ENCODE measurements at regions of chr4 and their contacts with region 1.

Region 1: DNA sequence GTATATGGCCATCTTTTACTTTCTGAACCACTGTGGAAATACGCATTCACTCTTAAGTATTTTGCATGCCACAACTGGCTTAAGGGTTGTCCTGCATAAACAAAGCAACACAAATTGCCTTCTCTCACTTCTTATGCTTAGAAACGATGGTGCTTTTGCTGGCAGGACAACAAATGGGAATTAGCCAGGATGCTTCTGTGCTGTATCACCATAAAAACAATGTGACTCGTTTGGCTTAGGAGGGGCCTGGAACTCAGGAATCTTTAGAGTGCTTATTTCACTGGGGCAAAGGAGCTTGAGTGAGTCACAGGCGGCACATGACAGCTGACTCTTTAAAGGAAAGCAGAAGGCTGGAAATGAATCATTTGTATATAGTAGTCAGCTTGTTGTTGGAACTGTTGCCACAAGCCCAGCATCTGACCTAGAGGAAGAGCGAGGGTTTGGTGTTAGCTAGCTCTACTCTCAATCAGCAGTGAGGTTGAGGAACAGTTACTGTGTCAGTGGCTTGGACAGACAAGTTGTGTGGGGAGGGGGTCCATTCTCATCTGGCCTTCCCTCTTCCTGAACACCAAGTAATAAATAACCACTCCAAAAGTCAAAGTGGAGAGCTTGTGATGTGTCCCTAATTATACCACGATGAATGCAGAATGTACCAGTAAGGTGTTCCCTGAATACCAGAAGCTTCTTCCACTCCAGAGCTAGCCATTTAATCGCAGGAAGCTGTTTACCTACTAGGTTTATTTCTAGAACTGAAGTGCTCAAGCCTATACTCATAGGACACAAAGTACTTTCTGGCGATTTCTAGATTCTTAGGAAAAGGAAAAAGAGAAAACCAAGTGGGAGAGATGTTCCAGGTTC is 293.1 kb downstream of the CAMK2D start:
- DNase-seq: peak; percentile 91 to 92
- ATAC-seq: peak; percentile 94
- H3K4me3 ChIP-seq: peak overlapping the region in 1 of 2 donors; percentile 26
- H3K27ac ChIP-seq: peak overlapping the region; percentile 94 to 97
- H3K4me1 ChIP-seq: peaks cover 3 to 7% of the 10 kb centered on the region in 2 donors
- H3K27me3 ChIP-seq: no peaks in the 10 kb centered on the region

Region 2: GRCh38 chr4:113445286-113445685 is 23.1 kb before region 1 on chr4:
- intact Hi-C with region 1: loop called in 1 of 2 experiments (anchors 2 kb)
- DNase-seq: peak; percentile 74 to 75
- ATAC-seq: peak; percentile 93
- H3K4me3 ChIP-seq: no peak overlapping the region
- H3K27ac ChIP-seq: peak overlapping the region; percentile 67 to 82
- H3K4me1 ChIP-seq: peaks cover 2 to 3% of the 10 kb centered on the region in 2 donors
- H3K27me3 ChIP-seq: no peaks in the 10 kb centered on the region

Region 3: DNA sequence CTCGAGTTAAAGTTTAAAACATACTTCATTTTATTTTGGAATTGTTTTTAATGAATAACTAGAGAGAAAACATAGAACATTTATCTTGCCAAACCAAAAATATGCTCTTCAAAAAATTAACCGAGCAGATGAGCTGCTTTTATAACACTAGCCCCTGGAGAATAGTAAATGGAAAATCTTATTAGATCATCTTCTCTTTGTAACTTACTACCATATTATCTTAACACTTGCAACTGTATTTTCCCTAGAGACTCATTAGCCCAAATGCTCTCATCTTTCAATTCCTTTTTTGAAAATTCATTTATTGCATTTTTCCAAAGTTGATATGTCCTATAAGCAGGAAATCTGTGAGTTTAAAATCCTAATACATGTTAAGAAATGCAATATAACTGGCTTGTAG is 149.8 kb after region 1 on chr4:
- intact Hi-C with region 1: no loop called
- DNase-seq: no peak
- ATAC-seq: no peak
- H3K4me3 ChIP-seq: no peak overlapping the region
- H3K27ac ChIP-seq: no peak overlapping the region
- H3K4me1 ChIP-seq: peaks cover 0 to 4% of the 10 kb centered on the region in 2 donors
- H3K27me3 ChIP-seq: no peaks in the 10 kb centered on the region

Region 4: GRCh38 chr4:113657586-113658233 is 189.3 kb after region 1 on chr4:
- intact Hi-C with region 1: no loop called
- DNase-seq: no peak
- ATAC-seq: no peak
- H3K4me3 ChIP-seq: no peak overlapping the region
- H3K27ac ChIP-seq: peak overlapping the region in 1 of 2 donors; percentile 40
- H3K4me1 ChIP-seq: peaks cover 3 to 4% of the 10 kb centered on the region in 2 donors
- H3K27me3 ChIP-seq: no peaks in the 10 kb centered on the region

Region 5: DNA sequence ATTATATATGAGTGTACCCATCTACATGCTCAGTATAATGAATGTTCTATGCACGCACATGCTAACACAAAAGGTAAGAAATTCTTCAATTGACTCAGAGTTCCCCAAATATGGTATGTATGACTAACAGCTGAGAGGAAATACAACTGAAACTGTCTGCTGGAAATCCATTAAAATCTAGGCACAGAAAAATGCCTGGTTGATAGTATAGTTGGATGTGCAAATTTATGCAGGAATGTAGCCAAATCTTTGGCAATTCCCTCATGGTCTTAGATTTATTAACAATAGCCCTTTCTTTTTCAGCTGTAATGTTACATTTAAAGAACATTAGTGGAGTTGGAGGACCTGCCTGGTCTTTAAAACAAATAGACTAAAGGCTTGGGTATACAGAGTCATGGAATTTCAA is 287.6 kb after region 1 on chr4:
- intact Hi-C with region 1: loop called in 1 of 2 experiments (anchors 10 kb)
- DNase-seq: no peak
- ATAC-seq: no peak
- H3K4me3 ChIP-seq: no peak overlapping the region
- H3K27ac ChIP-seq: no peak overlapping the region
- H3K4me1 ChIP-seq: no peaks in the 10 kb centered on the region
- H3K27me3 ChIP-seq: no peaks in the 10 kb centered on the region